ENCODE measurements at regions of chr19 and their contacts with region 1.

Region 1: GRCh38 chr19:17266975-17267788 is at the start of gene BABAM1:
- DNase-seq: peak; percentile 78 to 99 (median 96)
- ATAC-seq: peak; percentile 94 to 96
- H3K4me3 Mint-ChIP-seq: peak within 1 kb of the TSS; percentile 68 to 90 (median 83)
- H3K27ac Mint-ChIP-seq: peak within 1 kb of the TSS; percentile 38 to 96 (median 78)
- H3K4me1 Mint-ChIP-seq: peaks cover 7 to 27% (median 22%) of the 10 kb centered on the region in 4 donors
- H3K27me3 Mint-ChIP-seq: peaks cover 0 to 1% (median 0%) of the 10 kb centered on the region in 5 donors
- polyA plus RNA-seq, gene BABAM1: 102 to 106 (median 106) TPM

Region 2: GRCh38 chr19:17215125-17215971 is 51.8 kb before region 1 on chr19 and contains the start of gene USE1:
- POLR2A ChIA-PET with region 1: interaction called, 17 read pairs
- DNase-seq: peak; percentile 76 to 95 (median 86)
- ATAC-seq: peak; percentile 96 to 99
- H3K4me3 Mint-ChIP-seq: peak within 1 kb of the TSS; percentile 83 to 95 (median 90)
- H3K27ac Mint-ChIP-seq: peak within 1 kb of the TSS; percentile 94 to 100 (median 99)
- H3K4me1 Mint-ChIP-seq: peaks cover 2 to 21% (median 15%) of the 10 kb centered on the region in 4 donors
- H3K27me3 Mint-ChIP-seq: no peaks in the 10 kb centered on the region
- polyA plus RNA-seq, gene USE1: 50.4 to 69.0 (median 57.0) TPM

Region 3: DNA sequence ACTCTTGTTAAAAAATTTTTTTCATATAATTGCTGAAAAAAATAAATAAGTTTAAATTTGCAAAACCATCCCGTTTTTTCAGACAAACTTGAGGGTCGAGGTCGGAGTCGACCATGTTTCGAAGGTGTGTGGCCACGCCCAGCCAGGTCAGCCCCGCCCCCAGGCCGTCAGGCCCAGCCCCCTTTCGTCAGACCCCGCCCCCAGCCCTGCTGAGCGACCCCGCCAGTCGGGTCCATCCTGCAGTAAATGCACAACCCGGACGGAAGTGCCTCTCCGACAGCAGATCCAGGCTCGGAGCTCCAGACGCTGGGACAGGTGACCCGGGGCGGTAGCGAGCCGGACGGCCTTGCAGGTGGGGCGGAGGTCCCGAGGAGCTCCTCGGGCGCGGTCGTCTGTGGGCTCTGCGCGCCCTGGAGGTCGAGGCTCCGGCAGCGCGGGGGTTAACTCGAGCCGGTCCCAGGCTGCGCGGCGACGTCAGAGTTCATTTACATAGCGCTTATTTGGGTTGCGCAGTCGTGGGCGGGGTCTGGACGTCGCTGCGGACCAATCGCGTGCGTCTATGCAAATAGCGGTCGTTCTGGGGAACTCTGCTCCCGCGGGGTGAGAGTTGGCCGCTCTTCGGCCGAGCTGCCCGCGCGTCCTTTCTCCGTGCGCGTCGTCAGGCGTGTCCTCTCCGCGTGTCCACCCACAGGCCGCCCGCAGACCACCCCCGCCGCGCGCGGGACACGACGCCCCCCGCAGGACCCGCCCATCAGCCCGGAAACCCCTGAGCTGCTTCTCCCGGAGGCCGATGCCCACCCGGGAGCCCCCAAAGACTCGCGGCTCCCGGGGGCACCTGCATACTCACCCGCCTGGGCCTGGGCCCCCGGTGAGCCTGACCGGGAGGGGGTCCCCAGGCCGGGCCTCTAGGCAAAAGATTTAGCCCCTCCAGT is 40.9 kb before region 1 on chr19 and contains the start of gene OCEL1:
- POLR2A ChIA-PET with region 1: interaction called, 10 read pairs
- DNase-seq: peak; percentile 92 to 99 (median 94)
- ATAC-seq: peak; percentile 90 to 92
- H3K4me3 Mint-ChIP-seq: peak within 1 kb of the TSS; percentile 88 to 99 (median 94)
- H3K27ac Mint-ChIP-seq: peak within 1 kb of the TSS; percentile 66 to 99 (median 96)
- H3K4me1 Mint-ChIP-seq: peaks cover 7 to 17% (median 11%) of the 10 kb centered on the region in 4 donors
- H3K27me3 Mint-ChIP-seq: no peaks in the 10 kb centered on the region
- polyA plus RNA-seq, gene OCEL1: 21.9 to 52.4 (median 40.1) TPM

Region 4: GRCh38 chr19:17256130-17256529 is 11.1 kb before region 1 on chr19:
- POLR2A ChIA-PET with region 1: interaction called, 10 read pairs
- DNase-seq: no peak
- ATAC-seq: no peak
- H3K4me3 Mint-ChIP-seq: no peak overlapping the region
- H3K27ac Mint-ChIP-seq: no peak overlapping the region
- H3K4me1 Mint-ChIP-seq: peaks cover 4 to 7% (median 5%) of the 10 kb centered on the region in 4 donors
- H3K27me3 Mint-ChIP-seq: peaks cover 0 to 1% (median 0%) of the 10 kb centered on the region in 5 donors

Region 5: GRCh38 chr19:17282488-17283255 is 15.5 kb after region 1 on chr19:
- POLR2A ChIA-PET with region 1: interaction called, 20 read pairs
- DNase-seq: peak; percentile 63 to 89 (median 78)
- ATAC-seq: peak; percentile 91 to 94
- H3K4me3 Mint-ChIP-seq: peak overlapping the region; percentile 76 to 91 (median 83)
- H3K27ac Mint-ChIP-seq: no peak overlapping the region
- H3K4me1 Mint-ChIP-seq: peaks cover 4 to 9% (median 6%) of the 10 kb centered on the region in 4 donors
- H3K27me3 Mint-ChIP-seq: peaks cover 0 to 2% (median 0%) of the 10 kb centered on the region in 5 donors

Region 6: GRCh38 chr19:17305517-17306284 is 38.5 kb after region 1 on chr19 and contains the start of gene MRPL34:
- POLR2A ChIA-PET with region 1: interaction called, 16 read pairs
- DNase-seq: peak; percentile 84 to 98 (median 93)
- ATAC-seq: peak; percentile 59 to 63
- H3K4me3 Mint-ChIP-seq: peak within 1 kb of the TSS; percentile 82 to 94 (median 91)
- H3K27ac Mint-ChIP-seq: peak within 1 kb of the TSS; percentile 41 to 96 (median 93)
- H3K4me1 Mint-ChIP-seq: peaks cover 29 to 64% (median 59%) of the 10 kb centered on the region in 4 donors
- H3K27me3 Mint-ChIP-seq: no peaks in the 10 kb centered on the region
- polyA plus RNA-seq, gene MRPL34: 216 to 221 (median 221) TPM

Region 7: GRCh38 chr19:17370026-17370587 is 102.9 kb after region 1 on chr19:
- POLR2A ChIA-PET with region 1: no interaction called
- DNase-seq: no peak
- ATAC-seq: no peak
- H3K4me3 Mint-ChIP-seq: no peak overlapping the region
- H3K27ac Mint-ChIP-seq: peak overlapping the region in 1 of 10 donors; percentile 8
- H3K4me1 Mint-ChIP-seq: peaks cover 0 to 12% (median 2%) of the 10 kb centered on the region in 4 donors
- H3K27me3 Mint-ChIP-seq: peaks cover 0 to 12% (median 5%) of the 10 kb centered on the region in 5 donors

Measured in naive thymus-derived CD8-positive, alpha-beta T cell (primary cell).